AG04449 (cell line): ENCODE measurements at regions of chr6 and their contacts with region 1.

Region 1: GRCh38 chr6:119602215-119603178 is 252.9 kb upstream of the MAN1A1 start:
- DNase-seq: peak; percentile 53
- H3K4me3 ChIP-seq: no peak overlapping the region
- CTCF ChIP-seq: no peak

Region 2: DNA sequence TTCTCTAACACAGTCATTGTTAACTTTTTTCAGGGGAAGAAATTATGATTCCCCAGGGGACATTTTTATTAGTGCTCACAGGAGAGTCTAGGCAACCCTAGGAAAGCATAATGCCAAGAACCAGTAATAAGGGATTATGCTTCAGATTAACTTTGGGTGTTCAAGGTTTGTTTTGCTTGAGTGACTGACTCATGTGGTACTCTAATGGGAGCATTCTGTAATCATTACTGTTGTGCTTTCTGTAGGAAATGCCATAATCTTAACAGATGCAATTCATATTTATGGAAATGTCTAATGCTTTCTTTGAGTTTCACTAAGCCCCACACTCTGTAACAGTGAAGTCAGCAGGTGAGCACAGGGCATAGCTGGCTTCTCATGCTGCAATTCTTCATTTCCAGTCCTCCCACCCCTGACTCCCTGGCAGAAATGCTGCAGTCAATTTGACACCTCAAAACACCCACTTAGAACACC is 10.4 kb after region 1 on chr6:
- CTCF ChIA-PET with region 1: interaction called, 10 read pairs
- POLR2A ChIA-PET with region 1: no interaction called
- DNase-seq: no peak
- H3K4me3 ChIP-seq: no peak overlapping the region
- CTCF ChIP-seq: no peak

Region 3: DNA sequence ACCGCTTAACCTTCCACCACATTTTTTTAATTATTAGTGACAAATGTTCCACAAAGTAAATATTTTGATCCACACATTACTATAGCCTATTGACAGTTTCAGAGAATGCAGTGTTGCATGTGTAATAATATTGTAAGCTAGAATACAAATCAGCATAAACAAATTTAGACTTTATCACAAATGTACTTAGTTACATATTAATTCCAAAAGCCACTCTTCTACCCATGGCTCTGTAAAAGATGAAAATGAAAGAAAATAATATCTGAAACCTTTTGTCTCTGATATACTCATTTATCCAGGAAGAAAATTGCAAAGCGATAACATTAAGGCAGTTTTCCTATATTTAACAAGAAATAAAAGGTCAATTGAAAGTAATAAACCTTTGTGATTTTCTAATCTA is 701.0 kb after region 1 on chr6:
- CTCF ChIA-PET with region 1: no interaction called
- POLR2A ChIA-PET with region 1: no interaction called
- DNase-seq: no peak
- H3K4me3 ChIP-seq: no peak overlapping the region
- CTCF ChIP-seq: no peak